Activated CD4-positive, alpha-beta memory T cell treated with anti-CD3 and anti-CD28 coated beads for 36 hours (primary cell): ENCODE measurements at regions of chr18 and their contacts with region 1.

Region 1: DNA sequence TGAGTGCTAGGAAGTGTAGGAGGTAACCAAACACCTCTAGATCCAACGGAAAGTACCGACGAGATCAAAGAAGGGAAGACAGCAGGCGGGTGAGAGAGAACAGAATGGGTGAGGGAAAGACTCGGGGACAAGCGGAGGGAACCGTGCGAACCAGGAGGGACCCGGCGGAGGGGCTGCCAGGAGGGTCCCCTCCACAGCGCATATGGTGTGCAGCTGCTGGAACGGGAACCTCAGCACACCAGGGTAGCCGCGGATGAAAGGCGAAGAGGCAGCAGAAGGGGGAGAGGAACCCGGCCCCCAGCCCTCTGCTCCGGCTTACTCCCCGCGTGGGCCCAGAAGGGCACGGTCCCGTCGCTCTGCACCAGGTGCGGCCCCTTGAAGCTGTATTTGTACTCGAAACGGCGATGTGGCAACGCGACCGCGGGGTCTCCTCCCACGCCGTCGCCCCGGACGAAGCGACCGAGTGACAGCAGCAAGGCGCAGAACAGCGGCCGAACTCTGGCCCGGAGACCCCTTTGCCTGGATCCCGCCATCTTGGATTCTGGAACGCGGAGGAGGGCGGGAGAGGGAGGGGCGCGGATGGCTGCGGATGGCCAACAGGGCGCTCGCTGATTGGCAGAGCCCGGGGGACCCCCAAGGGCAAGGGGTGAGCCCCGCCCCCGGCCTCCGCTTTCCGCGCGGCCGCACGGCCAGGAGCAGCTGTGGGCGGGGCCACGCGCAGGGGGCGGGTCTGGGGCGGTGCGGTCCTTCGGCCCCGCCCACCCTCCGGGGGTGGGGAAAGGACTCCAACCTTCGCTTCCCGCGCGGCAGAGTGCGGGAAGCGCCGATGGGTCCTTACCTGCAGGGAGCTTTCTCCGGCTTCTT is at the start of gene LMAN1:
- DNase-seq: peak; percentile 97
- H3K4me3 Mint-ChIP-seq: peak within 1 kb of the TSS; percentile 83
- H3K27ac Mint-ChIP-seq: peak within 1 kb of the TSS; percentile 94
- H3K4me1 Mint-ChIP-seq: peaks cover 26% of the 10 kb centered on the region
- H3K27me3 Mint-ChIP-seq: no peaks in the 10 kb centered on the region
- total RNA-seq, gene LMAN1: 155 to 158 TPM

Region 2: GRCh38 chr18:57362714-57363113 is 1996.2 kb before region 1 on chr18:
- CTCF ChIA-PET with region 1: no interaction called
- POLR2A ChIA-PET with region 1: no interaction called
- intact Hi-C with region 1: no loop called
- DNase-seq: no peak
- H3K4me3 Mint-ChIP-seq: no peak overlapping the region
- H3K27ac Mint-ChIP-seq: no peak overlapping the region
- H3K4me1 Mint-ChIP-seq: no peaks in the 10 kb centered on the region
- H3K27me3 Mint-ChIP-seq: peaks cover 8% of the 10 kb centered on the region

Region 3: DNA sequence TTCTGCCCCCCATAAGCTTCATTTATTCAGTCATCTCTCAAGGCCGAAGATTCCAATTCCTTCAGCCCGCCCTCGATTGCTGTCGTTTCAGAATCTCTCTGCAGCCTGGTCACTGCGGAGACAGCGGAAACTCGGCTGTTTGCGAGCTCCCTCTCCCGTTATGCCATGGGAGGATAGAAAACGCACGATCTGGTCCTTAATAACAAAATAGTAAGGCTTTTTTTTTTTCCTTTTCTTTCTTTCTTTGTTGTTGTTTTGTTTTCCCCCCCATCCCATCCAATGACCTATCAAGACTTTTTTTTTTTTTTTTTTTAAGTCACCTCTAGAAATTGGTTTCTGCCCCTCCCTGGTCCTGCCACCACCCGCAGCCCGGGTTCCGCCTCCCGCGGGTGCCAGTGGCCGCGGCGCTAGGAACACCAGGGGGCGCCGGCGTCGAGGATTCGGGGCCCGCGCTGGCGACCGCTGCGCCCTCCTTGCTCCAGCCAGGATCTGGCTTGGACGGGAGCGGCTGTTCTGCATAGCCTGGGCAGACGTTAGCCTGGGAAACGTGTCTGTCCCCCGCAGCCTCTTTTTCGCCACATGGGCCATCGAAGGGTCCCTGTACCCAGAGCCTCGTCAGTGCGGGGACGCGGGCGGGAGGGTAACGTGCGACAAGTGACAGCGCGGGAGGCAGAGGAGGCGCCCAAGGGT is 50.6 kb before region 1 on chr18:
- CTCF ChIA-PET with region 1: interaction called, 15 read pairs
- POLR2A ChIA-PET with region 1: no interaction called
- intact Hi-C with region 1: no loop called
- DNase-seq: peak; percentile 75
- H3K4me3 Mint-ChIP-seq: no peak overlapping the region
- H3K27ac Mint-ChIP-seq: no peak overlapping the region
- H3K4me1 Mint-ChIP-seq: peaks cover 3% of the 10 kb centered on the region
- H3K27me3 Mint-ChIP-seq: peaks cover 37% of the 10 kb centered on the region

Region 4: DNA sequence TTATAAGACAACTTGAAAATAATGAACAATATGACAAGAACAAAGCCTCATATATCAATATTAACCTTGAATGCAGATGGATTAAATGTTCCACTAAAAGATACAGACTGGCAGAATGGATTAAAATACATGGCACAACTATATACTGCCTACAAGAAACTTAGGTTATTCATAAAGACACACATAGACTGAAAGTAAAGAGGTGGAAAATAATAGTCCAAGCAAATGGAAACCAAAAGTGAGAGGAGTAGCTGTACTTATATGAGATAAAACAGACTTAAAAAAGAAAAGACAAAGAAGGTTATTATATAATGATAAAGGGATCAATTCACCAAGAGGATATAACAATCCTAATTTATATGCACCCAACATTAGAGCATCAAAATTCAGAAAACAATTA is 18.1 kb before region 1 on chr18:
- CTCF ChIA-PET with region 1: no interaction called
- POLR2A ChIA-PET with region 1: interaction called, 3 read pairs
- intact Hi-C with region 1: loop called (anchors 1 kb)
- DNase-seq: no peak
- H3K4me3 Mint-ChIP-seq: no peak overlapping the region
- H3K27ac Mint-ChIP-seq: no peak overlapping the region
- H3K4me1 Mint-ChIP-seq: peaks cover 46% of the 10 kb centered on the region
- H3K27me3 Mint-ChIP-seq: no peaks in the 10 kb centered on the region

Region 5: DNA sequence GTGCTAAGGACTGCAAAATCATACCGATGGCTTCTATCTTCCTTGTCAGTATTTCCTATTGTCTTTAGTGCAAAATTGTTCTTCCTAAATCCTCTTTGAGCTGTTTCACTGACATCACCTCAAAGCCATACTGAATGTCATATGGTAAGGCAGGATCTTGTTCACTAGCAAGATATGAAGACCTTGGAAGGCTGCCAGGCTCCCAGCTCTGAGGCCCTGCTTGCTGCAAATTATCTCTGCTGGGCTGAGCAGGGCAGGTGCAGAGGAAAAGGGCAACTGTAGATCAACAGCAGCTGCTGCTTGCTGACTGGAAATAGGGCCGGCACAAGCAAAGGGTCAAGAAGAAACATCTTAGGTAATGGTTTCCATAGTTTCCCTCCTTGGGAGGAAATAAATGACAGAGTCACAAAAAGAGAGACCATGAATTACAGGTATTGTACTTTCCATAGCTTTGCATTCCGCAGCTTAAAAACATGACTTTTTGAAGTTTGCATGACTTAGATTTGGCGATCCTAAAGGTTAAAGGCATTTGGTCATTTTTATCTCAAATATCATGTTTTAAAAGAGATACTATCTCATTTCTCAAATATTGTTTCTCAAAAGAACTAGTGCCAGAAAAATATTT is 599.1 kb after region 1 on chr18:
- CTCF ChIA-PET with region 1: no interaction called
- POLR2A ChIA-PET with region 1: no interaction called
- intact Hi-C with region 1: loop called (anchors 10 kb)
- DNase-seq: peak; percentile 21
- H3K4me3 Mint-ChIP-seq: no peak overlapping the region
- H3K27ac Mint-ChIP-seq: no peak overlapping the region
- H3K4me1 Mint-ChIP-seq: peaks cover 23% of the 10 kb centered on the region
- H3K27me3 Mint-ChIP-seq: peaks cover 5% of the 10 kb centered on the region